Spleen (tissue), 13 donors: ENCODE measurements at regions of chr4 and their contacts with region 1.

Region 1: GRCh38 chr4:153573881-153574802 is 108.0 kb downstream of the TMEM131L start:
- DNase-seq: peak; percentile 83
- H3K4me3 ChIP-seq: no peak overlapping the region
- H3K27ac ChIP-seq: peak overlapping the region; percentile 17 to 54 (median 38)
- H3K4me1 ChIP-seq: peaks cover 37 to 99% (median 65%) of the 10 kb centered on the region in 6 donors
- H3K27me3 ChIP-seq: no peaks in the 10 kb centered on the region
- CTCF ChIP-seq: peak; percentile 41 to 72 (median 60)
- POLR2A ChIP-seq: no peak

Region 2: DNA sequence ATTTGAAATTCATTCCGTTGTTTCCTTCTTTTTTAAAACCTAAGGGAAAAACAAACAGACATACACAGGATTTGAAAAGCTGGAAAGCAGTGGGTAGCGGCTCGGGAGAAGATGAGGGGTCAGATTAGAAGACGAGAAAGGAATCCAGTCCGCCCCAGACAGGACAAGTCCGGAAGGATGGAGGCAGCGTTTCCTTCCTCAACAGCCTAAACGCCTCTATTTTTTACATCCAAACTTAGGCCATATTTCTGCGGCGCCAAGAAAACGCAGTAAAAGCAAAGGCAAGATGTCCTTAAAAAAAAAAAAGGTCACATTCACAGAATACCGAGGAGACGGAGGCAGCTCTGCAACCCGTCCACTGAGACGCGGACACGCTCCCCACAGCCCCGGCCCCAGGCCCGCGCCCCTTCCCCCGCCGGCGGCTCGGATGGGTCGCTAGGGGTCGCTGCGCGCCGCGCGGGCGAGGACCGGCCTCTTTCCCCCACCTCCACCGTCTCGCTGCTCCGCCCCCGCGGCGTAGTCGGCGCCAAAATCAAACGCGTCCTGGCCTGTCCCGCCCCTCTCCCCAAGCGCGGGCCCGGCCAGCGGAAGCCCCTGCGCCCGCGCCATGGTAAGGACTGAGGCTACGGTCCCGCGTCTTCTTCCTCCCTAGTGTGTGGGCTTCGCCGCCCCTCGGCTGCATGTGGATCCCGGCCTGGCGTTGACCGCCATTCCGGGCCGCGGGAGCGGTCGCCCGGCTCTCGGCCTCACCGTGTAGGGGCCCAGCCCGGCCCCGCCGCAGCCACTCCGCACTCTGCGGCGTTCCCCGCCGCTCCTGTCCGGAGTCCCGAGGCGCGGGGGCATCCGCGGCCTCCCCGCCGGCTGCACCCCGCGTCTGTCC is 229.8 kb before region 1 on chr4 and contains the start of gene MND1:
- intact Hi-C with region 1: loop called (anchors 2 kb)
- DNase-seq: peak; percentile 96
- H3K4me3 ChIP-seq: peak within 1 kb of the TSS; percentile 75 to 99 (median 96)
- H3K27ac ChIP-seq: peak within 1 kb of the TSS in 5 of 8 donors; percentile 13 to 49 (median 31)
- H3K4me1 ChIP-seq: peaks cover 7 to 47% (median 28%) of the 10 kb centered on the region in 6 donors
- H3K27me3 ChIP-seq: no peaks in the 10 kb centered on the region
- CTCF ChIP-seq: peak; percentile 59 to 98 (median 92)
- POLR2A ChIP-seq: no peak
- total RNA-seq, gene MND1: 0.76 to 4.9 (median 1.8) TPM

Region 3: GRCh38 chr4:153466081-153466948 is 107.8 kb before region 1 on chr4 and contains the start of gene TMEM131L:
- intact Hi-C with region 1: loop called (anchors 10 kb)
- DNase-seq: peak; percentile 95
- H3K4me3 ChIP-seq: peak within 1 kb of the TSS; percentile 86 to 100 (median 98)
- H3K27ac ChIP-seq: peak within 1 kb of the TSS; percentile 94 to 98 (median 96)
- H3K4me1 ChIP-seq: peaks cover 28 to 64% (median 54%) of the 10 kb centered on the region in 6 donors
- H3K27me3 ChIP-seq: no peaks in the 10 kb centered on the region
- CTCF ChIP-seq: peak in 8 of 11 experiments; percentile 26 to 56 (median 32)
- POLR2A ChIP-seq: peak in 1 of 3 donors; percentile 44
- total RNA-seq, gene TMEM131L: 73.5 to 105 (median 83.1) TPM